GM12878 (cell line): ENCODE measurements at regions of chr16 and their contacts with region 1.

Region 1: DNA sequence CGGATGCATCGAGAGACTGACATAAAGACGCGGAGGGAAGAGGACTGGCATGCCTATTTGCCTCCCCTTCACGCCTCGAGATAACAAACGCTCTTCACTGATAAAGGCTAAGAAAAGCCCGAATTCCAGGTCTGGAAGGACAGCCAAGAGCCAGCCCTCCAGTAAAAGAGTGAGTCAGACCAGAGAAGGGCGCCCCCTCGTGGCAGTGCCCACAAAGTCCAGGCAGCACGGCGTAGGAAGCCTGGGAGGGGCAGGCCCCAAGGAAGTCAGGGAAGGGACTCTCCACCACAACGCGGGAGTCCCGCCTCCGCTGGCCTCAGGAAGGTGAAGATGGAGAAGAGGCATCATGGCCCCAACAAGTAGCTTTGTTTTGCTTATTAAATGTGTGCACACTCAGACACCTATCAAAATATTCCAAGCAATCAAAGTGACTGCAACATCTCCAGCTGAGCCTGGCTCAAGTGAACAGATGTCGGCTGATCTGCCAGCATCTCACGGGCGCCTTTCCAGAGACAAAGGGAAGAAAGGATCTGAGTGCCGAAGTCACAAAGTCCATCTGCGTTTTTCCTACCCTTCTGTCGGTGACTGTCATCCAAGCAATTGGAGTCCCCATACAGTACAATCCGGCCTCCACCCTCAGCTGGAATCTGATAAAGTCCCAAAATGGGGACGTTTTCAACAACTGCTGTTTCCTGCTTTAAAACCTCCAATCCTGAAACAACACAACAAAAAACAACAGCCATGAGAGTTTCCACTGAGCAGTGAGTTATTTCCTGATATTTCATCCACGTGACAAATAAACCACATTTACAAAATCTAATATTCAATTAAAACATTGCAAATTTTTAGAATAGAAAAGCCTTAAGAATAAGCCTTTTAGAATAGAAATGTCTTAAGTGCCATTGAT is 20.4 kb upstream of the SLC38A8 start:
- DNase-seq: no peak
- ATAC-seq: peak; percentile 92
- H3K4me3 ChIP-seq: no peak overlapping the region
- H3K27ac ChIP-seq: no peak overlapping the region
- H3K4me1 ChIP-seq: no peaks in the 10 kb centered on the region
- H3K27me3 ChIP-seq: no peaks in the 10 kb centered on the region
- CTCF ChIP-seq: peak; percentile 55 to 75 (median 71)
- EP300 ChIP-seq: no peak
- POLR2A ChIP-seq: no peak
- RAD21 ChIP-seq: 0 out of 2 replicates have a peak, but pooled peaks have one; percentile 26

Region 2: GRCh38 chr16:83826146-83826913 is 236.7 kb before region 1 on chr16:
- CTCF ChIA-PET with region 1: interaction called, 6 read pairs
- POLR2A ChIA-PET with region 1: no interaction called
- RAD21 ChIA-PET with region 1: no interaction called
- SMC1A ChIA-PET with region 1: no interaction called
- in situ Hi-C with region 1: loop called (anchors 5 kb)
- intact Hi-C with region 1: loop called (anchors 5 kb)
- DNase-seq: no peak
- ATAC-seq: peak; percentile 99
- H3K4me3 ChIP-seq: no peak overlapping the region
- H3K27ac ChIP-seq: no peak overlapping the region
- H3K4me1 ChIP-seq: no peaks in the 10 kb centered on the region
- H3K27me3 ChIP-seq: no peaks in the 10 kb centered on the region
- CTCF ChIP-seq: peak; percentile 91 to 93 (median 93)
- EP300 ChIP-seq: no peak
- POLR2A ChIP-seq: no peak
- RAD21 ChIP-seq: peak; percentile 85

Region 3: DNA sequence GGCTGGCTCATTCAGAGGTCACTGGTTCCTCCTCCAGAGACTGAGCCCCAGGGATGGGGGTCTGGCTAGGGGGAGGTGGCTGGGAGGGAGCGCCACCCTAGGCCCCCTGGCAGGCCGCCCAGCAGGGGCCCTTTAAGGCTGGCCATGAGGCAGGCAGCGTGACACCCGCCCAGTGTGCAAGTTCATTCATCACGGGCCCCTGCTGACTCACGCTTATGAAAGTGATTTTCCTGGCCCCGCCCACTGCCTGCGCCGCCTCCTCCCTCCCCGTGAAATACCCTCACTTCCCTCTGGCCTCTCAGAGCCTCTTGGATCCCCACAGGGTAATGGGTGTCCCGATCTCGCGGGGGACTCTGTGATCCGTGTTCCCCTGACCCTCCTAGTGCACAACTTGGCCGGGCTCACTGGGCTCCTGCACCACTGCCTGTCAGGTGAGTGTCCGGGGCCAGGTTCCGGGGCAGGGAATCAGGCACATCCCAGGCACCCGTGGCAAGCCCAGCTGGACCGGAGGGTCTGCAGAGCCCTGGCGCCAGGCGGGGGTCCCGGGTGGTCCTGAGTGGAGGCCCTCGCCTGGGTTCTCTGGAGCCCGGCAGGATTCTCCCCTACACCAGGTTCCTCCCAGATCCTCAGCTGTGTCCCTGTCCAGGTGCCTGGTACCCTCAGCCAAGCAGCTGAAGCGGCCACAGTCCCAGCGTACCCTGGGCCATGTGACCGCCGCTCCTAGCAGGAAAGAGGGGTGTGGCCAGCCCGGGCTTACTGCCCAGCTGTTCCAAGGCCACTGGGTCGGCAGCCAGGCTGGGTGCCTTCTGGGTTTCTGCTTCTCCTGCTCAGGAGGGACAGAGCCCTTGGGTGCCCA is 109.8 kb before region 1 on chr16 and contains the start of gene OSGIN1:
- CTCF ChIA-PET with region 1: interaction called, 19 read pairs
- POLR2A ChIA-PET with region 1: no interaction called
- RAD21 ChIA-PET with region 1: interaction called, 5 read pairs
- SMC1A ChIA-PET with region 1: interaction called, 3 read pairs
- in situ Hi-C with region 1: loop called (anchors 5 kb)
- intact Hi-C with region 1: loop called (anchors 1 kb)
- DNase-seq: peak; percentile 25
- ATAC-seq: peak; percentile 91
- H3K4me3 ChIP-seq: 0 out of 2 replicates have a peak within 1 kb of the TSS, but pooled peaks have one; percentile 16
- H3K27ac ChIP-seq: no peak within 1 kb of the TSS
- H3K4me1 ChIP-seq: peaks cover 3% of the 10 kb centered on the region; the same call in 1 of the 2 replicates
- H3K27me3 ChIP-seq: no peaks in the 10 kb centered on the region
- CTCF ChIP-seq: no peak
- EP300 ChIP-seq: no peak
- POLR2A ChIP-seq: peak; percentile 57
- RAD21 ChIP-seq: no peak
- polyA plus RNA-seq, gene OSGIN1: not detected

Region 4: DNA sequence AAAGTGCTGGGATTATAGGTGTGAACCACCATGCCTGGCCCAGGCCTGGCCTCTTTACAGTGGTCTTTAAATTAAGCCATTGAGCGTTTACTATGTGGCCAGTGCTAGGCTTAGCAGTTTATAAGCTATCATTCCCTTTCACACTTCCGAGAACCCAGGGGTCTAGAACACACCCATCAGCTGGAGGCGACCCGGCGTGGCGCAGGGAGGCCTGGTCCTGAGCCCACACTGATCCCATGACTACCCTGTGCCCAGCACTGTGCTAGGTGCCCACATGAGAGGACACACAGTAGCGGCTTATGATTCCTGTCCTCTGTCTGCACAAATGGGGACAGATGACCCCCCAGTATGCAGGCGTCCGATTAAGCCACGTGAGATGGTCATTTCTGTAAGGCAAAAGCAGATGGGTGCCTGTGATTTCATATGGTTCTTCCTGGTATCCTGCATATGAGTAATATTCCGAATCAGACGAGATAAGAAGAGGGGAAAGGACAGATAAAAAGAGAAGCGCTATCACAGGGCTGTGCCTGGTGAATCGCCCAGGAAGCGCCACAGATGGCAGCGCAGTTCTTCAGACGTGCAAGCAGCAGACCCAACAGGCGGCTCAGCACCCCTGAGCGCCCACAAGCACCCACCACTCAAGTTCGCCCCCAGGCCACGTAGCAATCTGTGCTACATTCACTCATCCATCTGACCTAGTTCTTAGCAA is 104.7 kb before region 1 on chr16:
- CTCF ChIA-PET with region 1: interaction called, 19 read pairs
- POLR2A ChIA-PET with region 1: no interaction called
- RAD21 ChIA-PET with region 1: interaction called, 5 read pairs
- SMC1A ChIA-PET with region 1: interaction called, 3 read pairs
- in situ Hi-C with region 1: loop called (anchors 5 kb)
- intact Hi-C with region 1: loop called (anchors 1 kb)
- DNase-seq: no peak
- ATAC-seq: no peak
- H3K4me3 ChIP-seq: no peak overlapping the region
- H3K27ac ChIP-seq: no peak overlapping the region
- H3K4me1 ChIP-seq: peaks cover 3% of the 10 kb centered on the region; the same call in 1 of the 2 replicates
- H3K27me3 ChIP-seq: no peaks in the 10 kb centered on the region
- CTCF ChIP-seq: no peak
- EP300 ChIP-seq: no peak
- POLR2A ChIP-seq: no peak
- RAD21 ChIP-seq: no peak

Region 5: GRCh38 chr16:84048270-84048669 is 14.7 kb before region 1 on chr16:
- CTCF ChIA-PET with region 1: interaction called, 10 read pairs
- POLR2A ChIA-PET with region 1: no interaction called
- RAD21 ChIA-PET with region 1: no interaction called
- SMC1A ChIA-PET with region 1: no interaction called
- in situ Hi-C with region 1: no loop called
- intact Hi-C with region 1: no loop called
- DNase-seq: no peak
- ATAC-seq: peak; percentile 38; the same call in 1 of the 3 replicates
- H3K4me3 ChIP-seq: no peak overlapping the region
- H3K27ac ChIP-seq: no peak overlapping the region
- H3K4me1 ChIP-seq: no peaks in the 10 kb centered on the region
- H3K27me3 ChIP-seq: no peaks in the 10 kb centered on the region; a peak in 2 of 4 replicates
- CTCF ChIP-seq: no peak
- EP300 ChIP-seq: no peak
- POLR2A ChIP-seq: no peak
- RAD21 ChIP-seq: no peak

Region 6: GRCh38 chr16:84116720-84117493 is 53.9 kb after region 1 on chr16 and contains the start of gene MBTPS1:
- CTCF ChIA-PET with region 1: no interaction called
- POLR2A ChIA-PET with region 1: no interaction called
- RAD21 ChIA-PET with region 1: no interaction called
- SMC1A ChIA-PET with region 1: no interaction called
- in situ Hi-C with region 1: no loop called
- intact Hi-C with region 1: no loop called
- DNase-seq: peak; percentile 91
- ATAC-seq: peak; percentile 95
- H3K4me3 ChIP-seq: peak within 1 kb of the TSS; percentile 93
- H3K27ac ChIP-seq: peak within 1 kb of the TSS; percentile 89
- H3K4me1 ChIP-seq: peaks cover 11% of the 10 kb centered on the region; the same call in 1 of the 2 replicates
- H3K27me3 ChIP-seq: no peaks in the 10 kb centered on the region
- CTCF ChIP-seq: 0 out of 6 replicates have a peak, but pooled peaks of 1 of the 3 experiments have one; percentile 20
- EP300 ChIP-seq: 0 out of 4 replicates have a peak, but pooled peaks of 1 of the 2 experiments have one; percentile 47
- POLR2A ChIP-seq: peak; percentile 93
- RAD21 ChIP-seq: no peak; the same call in 1 of the 2 replicates
- polyA plus RNA-seq, gene MBTPS1: 1.3 to 3.3 TPM

Region 7: GRCh38 chr16:84175350-84176081 is 112.5 kb after region 1 on chr16:
- CTCF ChIA-PET with region 1: interaction called, 11 read pairs
- POLR2A ChIA-PET with region 1: no interaction called
- RAD21 ChIA-PET with region 1: interaction called, 5 read pairs
- SMC1A ChIA-PET with region 1: no interaction called
- in situ Hi-C with region 1: no loop called
- intact Hi-C with region 1: no loop called
- DNase-seq: peak; percentile 19
- ATAC-seq: peak; percentile 89
- H3K4me3 ChIP-seq: no peak overlapping the region
- H3K27ac ChIP-seq: no peak overlapping the region
- H3K4me1 ChIP-seq: peaks cover 13% of the 10 kb centered on the region
- H3K27me3 ChIP-seq: no peaks in the 10 kb centered on the region
- CTCF ChIP-seq: peak; percentile 70 to 75 (median 75)
- EP300 ChIP-seq: no peak
- POLR2A ChIP-seq: no peak
- RAD21 ChIP-seq: peak; percentile 68

Region 8: GRCh38 chr16:84186685-84187437 is 123.9 kb after region 1 on chr16 and contains the start of gene TAF1C:
- CTCF ChIA-PET with region 1: interaction called, 16 read pairs
- POLR2A ChIA-PET with region 1: no interaction called
- RAD21 ChIA-PET with region 1: interaction called, 3 read pairs
- SMC1A ChIA-PET with region 1: interaction called, 6 read pairs
- in situ Hi-C with region 1: no loop called
- intact Hi-C with region 1: no loop called
- DNase-seq: peak; percentile 66
- ATAC-seq: peak; percentile 97
- H3K4me3 ChIP-seq: peak within 1 kb of the TSS; percentile 89
- H3K27ac ChIP-seq: peak within 1 kb of the TSS; percentile 86
- H3K4me1 ChIP-seq: no peaks in the 10 kb centered on the region
- H3K27me3 ChIP-seq: no peaks in the 10 kb centered on the region
- CTCF ChIP-seq: peak; percentile 94 to 99 (median 97); a peak in 5 of 6 replicates
- EP300 ChIP-seq: peak in 1 of 2 experiments; percentile 21; a peak in 1 of 4 replicates
- POLR2A ChIP-seq: peak; percentile 82
- RAD21 ChIP-seq: peak; percentile 84
- polyA plus RNA-seq, gene TAF1C: 0.98 to 2.0 TPM